K562 (cell line): ENCODE measurements at regions of chr3 and their contacts with region 1.

Region 1: DNA sequence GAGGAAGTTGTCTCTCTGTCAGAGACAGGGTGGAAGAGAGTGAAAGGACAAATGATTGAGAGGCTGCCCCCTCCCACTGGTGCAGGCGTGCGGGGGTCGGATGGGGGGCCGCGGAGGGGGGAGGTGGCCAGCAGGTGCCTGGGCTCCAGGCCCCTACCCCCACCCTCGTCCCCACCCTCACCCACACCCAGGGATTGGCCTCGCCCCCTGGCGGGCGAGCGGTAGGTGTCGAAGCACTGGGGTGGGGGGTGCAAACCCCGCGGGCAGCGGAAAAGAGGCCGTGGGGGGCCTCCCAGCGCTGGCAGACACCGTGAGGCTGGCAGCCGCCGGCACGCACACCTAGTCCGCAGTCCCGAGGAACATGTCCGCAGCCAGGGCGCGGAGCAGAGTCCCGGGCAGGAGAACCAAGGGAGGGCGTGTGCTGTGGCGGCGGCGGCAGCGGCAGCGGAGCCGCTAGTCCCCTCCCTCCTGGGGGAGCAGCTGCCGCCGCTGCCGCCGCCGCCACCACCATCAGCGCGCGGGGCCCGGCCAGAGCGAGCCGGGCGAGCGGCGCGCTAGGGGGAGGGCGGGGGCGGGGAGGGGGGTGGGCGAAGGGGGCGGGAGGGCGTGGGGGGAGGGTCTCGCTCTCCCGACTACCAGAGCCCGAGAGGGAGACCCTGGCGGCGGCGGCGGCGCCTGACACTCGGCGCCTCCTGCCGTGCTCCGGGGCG is at the start of gene KAT2B:
- DNase-seq: peak; percentile 89 to 93 (median 90)
- ATAC-seq: peak; percentile 81
- H3K4me3 ChIP-seq: peak within 1 kb of the TSS; percentile 80
- H3K27ac ChIP-seq: peak within 1 kb of the TSS; percentile 89
- H3K4me1 ChIP-seq: peaks cover 26 to 30% of the 10 kb centered on the region in 2 experiments; a peak in 4 of 5 replicates
- H3K27me3 ChIP-seq: no peaks in the 10 kb centered on the region
- CTCF ChIP-seq: peak; percentile 59 to 84 (median 64)
- EP300 ChIP-seq: no peak
- POLR2A ChIP-seq: peak; percentile 60
- RAD21 ChIP-seq: peak; percentile 57 to 65
- polyA plus RNA-seq, gene KAT2B: 3.3 to 3.5 TPM

Region 2: DNA sequence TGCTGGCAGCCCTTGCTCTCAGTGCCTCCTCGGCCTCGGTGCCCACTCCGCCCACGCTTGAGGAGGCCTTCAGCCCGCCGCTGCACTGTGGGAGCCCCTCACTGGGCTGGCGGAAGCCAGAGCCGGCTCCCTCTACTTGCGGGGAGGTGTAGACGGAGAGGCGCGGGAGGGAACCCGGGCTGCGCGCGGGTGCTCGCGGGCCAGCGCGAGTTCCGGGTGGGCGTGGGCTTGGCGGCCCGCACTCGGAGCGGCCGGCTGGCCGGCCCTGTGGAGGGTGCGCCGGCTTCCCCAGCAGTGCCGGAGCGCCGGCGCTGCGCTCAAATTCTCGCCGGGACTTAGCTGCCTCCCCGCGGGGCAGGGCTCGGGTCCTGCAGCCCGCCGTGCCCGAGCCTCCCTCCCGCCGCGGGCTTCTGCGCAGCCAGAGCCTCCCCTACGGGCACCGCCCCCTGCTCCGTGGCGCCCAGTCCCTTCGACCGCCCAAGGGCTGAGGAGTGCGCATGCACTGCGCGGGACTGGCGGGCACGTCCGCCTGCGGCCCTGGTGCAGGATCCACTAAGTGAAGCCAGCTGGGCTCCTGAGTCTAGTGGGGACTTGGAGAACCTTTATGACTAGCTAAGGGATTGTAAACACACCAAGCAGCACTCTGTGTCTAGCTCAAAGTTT is 337.4 kb before region 1 on chr3:
- CTCF ChIA-PET with region 1: no interaction called
- POLR2A ChIA-PET with region 1: no interaction called
- in situ Hi-C with region 1: no loop called
- intact Hi-C with region 1: no loop called
- DNase-seq: peak in 1 of 4 experiments; percentile 7
- ATAC-seq: peak; percentile 70
- H3K4me3 ChIP-seq: 0 out of 2 replicates have a peak overlapping the region, but pooled peaks have one; percentile 10
- H3K27ac ChIP-seq: no peak overlapping the region
- H3K4me1 ChIP-seq: peaks cover 0 to 7% of the 10 kb centered on the region in 2 experiments; a peak in 1 of 5 replicates
- H3K27me3 ChIP-seq: no peaks in the 10 kb centered on the region
- CTCF ChIP-seq: no peak
- EP300 ChIP-seq: no peak
- POLR2A ChIP-seq: no peak
- RAD21 ChIP-seq: no peak

Region 3: DNA sequence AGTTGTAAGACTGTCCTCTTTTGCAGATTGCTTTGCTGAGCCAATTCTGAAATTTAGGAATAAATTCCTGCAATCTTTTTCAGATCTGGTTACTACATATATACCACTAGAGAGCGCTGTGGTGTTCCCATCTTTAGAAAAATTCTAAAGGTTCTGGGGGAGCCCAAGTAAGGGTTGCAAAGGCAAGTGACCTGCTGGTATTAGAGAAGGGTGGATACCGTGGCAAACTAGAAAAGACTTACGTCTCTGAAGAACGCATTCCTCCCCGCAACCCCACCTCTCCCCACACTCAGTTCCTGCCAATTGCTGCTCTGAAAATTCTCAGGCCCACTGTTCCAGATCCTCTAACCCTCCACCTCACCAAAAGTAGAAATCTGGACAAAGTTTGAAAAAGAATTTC is 154.5 kb before region 1 on chr3:
- CTCF ChIA-PET with region 1: interaction called, 4 read pairs
- POLR2A ChIA-PET with region 1: interaction called, 3 read pairs
- in situ Hi-C with region 1: no loop called
- intact Hi-C with region 1: loop called (anchors 1 kb)
- DNase-seq: peak; percentile 64 to 73 (median 69)
- ATAC-seq: peak; percentile 71
- H3K4me3 ChIP-seq: no peak overlapping the region
- H3K27ac ChIP-seq: no peak overlapping the region
- H3K4me1 ChIP-seq: peaks cover 0 to 17% of the 10 kb centered on the region in 2 experiments; a peak in 3 of 5 replicates
- H3K27me3 ChIP-seq: no peaks in the 10 kb centered on the region; a peak in 1 of 5 replicates
- CTCF ChIP-seq: peak; percentile 56 to 90 (median 77); a peak in 5 of 6 replicates
- EP300 ChIP-seq: peak; percentile 25; the same call in 1 of the 2 replicates
- POLR2A ChIP-seq: no peak
- RAD21 ChIP-seq: peak; percentile 92

Region 4: GRCh38 chr3:19967812-19968211 is 72.1 kb before region 1 on chr3:
- CTCF ChIA-PET with region 1: no interaction called
- POLR2A ChIA-PET with region 1: no interaction called
- in situ Hi-C with region 1: no loop called
- intact Hi-C with region 1: loop called (anchors 5 kb)
- DNase-seq: no peak
- ATAC-seq: peak; percentile 30
- H3K4me3 ChIP-seq: no peak overlapping the region
- H3K27ac ChIP-seq: peak overlapping the region; percentile 11; the same call in 1 of the 3 replicates
- H3K4me1 ChIP-seq: peaks cover 6 to 12% of the 10 kb centered on the region in 2 experiments; a peak in 4 of 5 replicates
- H3K27me3 ChIP-seq: no peaks in the 10 kb centered on the region
- CTCF ChIP-seq: no peak
- EP300 ChIP-seq: peak; percentile 48; the same call in 1 of the 2 replicates
- POLR2A ChIP-seq: no peak
- RAD21 ChIP-seq: no peak

Region 5: GRCh38 chr3:20023623-20024405 is 16.1 kb before region 1 on chr3:
- CTCF ChIA-PET with region 1: no interaction called
- POLR2A ChIA-PET with region 1: interaction called, 12 read pairs
- in situ Hi-C with region 1: no loop called
- intact Hi-C with region 1: loop called (anchors 1 kb)
- DNase-seq: peak in 2 of 4 experiments; percentile 59 to 77
- ATAC-seq: peak; percentile 80
- H3K4me3 ChIP-seq: no peak overlapping the region
- H3K27ac ChIP-seq: peak overlapping the region; percentile 66
- H3K4me1 ChIP-seq: peaks cover 15 to 24% of the 10 kb centered on the region in 2 experiments; a peak in 4 of 5 replicates
- H3K27me3 ChIP-seq: no peaks in the 10 kb centered on the region
- CTCF ChIP-seq: no peak
- EP300 ChIP-seq: no peak
- POLR2A ChIP-seq: no peak
- RAD21 ChIP-seq: no peak

Region 6: DNA sequence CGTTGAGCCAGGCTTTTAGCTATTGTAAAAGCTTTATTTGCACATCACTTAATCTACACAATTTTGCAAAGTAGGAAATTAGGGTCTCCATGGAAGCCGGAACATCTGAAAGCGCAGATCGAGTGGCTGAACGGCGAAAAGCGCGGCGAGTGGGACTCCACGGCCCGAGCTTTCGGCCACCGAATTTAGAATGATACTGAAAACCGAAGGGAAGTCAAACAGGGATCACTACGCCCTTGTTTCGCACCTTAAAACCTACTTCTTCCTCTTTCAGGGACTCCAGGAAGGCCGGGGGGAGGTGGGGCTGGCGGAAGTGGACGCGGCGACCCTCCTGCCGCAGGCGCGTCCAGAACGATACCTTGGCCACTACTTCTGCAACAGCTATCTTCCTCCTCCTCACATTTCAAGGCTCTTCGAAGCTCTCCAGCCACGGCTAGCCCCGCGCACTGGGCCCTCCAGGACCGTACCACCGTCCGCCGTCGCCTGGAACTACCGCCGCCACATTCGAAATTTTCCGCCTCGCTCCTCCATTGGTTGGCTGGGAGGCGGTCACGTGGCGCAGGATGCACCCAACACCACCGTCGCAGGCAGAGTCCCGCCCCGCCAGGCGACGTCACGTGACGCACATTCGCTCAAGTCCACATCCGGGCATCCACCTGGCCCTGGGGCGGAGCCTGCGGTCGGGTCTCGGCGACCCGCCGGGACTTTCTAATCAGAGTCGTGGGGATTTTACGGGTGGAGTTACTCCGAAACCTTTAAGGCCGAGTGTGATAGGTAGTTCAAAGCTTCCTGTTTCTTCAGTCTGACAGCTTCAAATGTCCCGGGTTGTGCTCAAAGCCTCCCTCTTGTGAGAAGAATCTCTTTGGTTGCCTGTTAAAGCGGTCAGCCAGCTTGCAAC is 146.0 kb after region 1 on chr3 and contains the start of gene SGO1:
- CTCF ChIA-PET with region 1: no interaction called
- POLR2A ChIA-PET with region 1: interaction called, 3 read pairs
- in situ Hi-C with region 1: no loop called
- intact Hi-C with region 1: loop called (anchors 1 kb)
- DNase-seq: peak; percentile 98 to 100 (median 99)
- ATAC-seq: peak; percentile 94
- H3K4me3 ChIP-seq: peak within 1 kb of the TSS; percentile 61
- H3K27ac ChIP-seq: peak within 1 kb of the TSS; percentile 94
- H3K4me1 ChIP-seq: peaks cover 0 to 8% of the 10 kb centered on the region in 2 experiments; a peak in 2 of 5 replicates
- H3K27me3 ChIP-seq: no peaks in the 10 kb centered on the region
- CTCF ChIP-seq: no peak
- EP300 ChIP-seq: peak; percentile 9
- POLR2A ChIP-seq: peak; percentile 95
- RAD21 ChIP-seq: 0 out of 4 replicates have a peak, but pooled peaks of 1 of the 2 experiments have one; percentile 6
- polyA plus RNA-seq, gene SGO1: 13.7 to 17.0 TPM